Naive thymus-derived CD4-positive, alpha-beta T cell (primary cell): ENCODE measurements at regions of chr11 and their contacts with region 1.

Region 1: DNA sequence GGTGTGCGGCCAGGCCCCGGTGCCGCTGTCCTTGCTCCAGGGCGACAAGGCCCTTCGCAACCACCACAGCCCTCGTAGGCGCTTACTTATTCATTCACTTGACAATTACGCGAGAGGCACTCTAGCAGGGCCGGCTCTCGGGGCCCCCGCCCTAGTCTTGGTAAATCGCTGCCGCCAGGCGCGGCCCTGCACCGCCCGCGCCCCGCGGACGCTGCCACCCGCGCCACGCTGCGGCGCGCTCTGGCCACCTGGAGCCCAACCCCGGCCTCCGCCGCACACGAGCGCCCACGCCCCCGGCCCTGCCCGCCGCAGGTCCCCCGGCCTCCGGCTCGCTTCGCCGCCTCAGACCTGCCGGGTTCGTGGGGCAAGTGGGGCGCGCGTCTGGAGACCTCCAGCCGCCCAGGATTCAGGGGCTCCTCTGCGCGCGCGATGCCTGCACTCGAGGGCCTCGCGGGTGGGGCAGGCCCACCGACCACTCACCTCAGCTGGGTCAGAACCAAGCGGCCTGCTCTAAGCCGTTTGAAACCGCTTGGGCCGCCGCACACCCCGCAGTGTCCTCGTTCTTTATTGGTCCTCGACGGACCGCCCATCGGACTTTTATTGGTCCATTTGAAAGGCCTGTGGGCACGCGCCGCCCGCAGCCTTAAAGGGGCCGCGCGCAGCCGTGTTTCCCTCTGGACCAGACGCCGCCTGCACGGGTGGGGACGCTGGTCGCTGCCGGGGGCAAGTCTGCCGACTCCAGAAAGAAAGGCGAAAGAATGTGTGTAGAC is at the start of gene CKAP5:
- DNase-seq: peak; percentile 63 to 89 (median 80)
- ATAC-seq: peak; percentile 96
- H3K4me3 ChIP-seq: peak within 1 kb of the TSS; percentile 71
- H3K4me3 Mint-ChIP-seq: peak within 1 kb of the TSS; percentile 85 to 99 (median 97)
- H3K27ac ChIP-seq: peak within 1 kb of the TSS; percentile 71
- H3K27ac Mint-ChIP-seq: peak within 1 kb of the TSS; percentile 88 to 97 (median 93)
- H3K4me1 ChIP-seq: peaks cover 0 to 14% of the 10 kb centered on the region in 2 donors
- H3K4me1 Mint-ChIP-seq: peaks cover 33 to 50% (median 43%) of the 10 kb centered on the region in 7 donors
- H3K27me3 ChIP-seq: no peaks in the 10 kb centered on the region
- H3K27me3 Mint-ChIP-seq: no peaks in the 10 kb centered on the region
- total RNA-seq, gene CKAP5: 28.3 to 126 (median 46.0) TPM

Region 2: DNA sequence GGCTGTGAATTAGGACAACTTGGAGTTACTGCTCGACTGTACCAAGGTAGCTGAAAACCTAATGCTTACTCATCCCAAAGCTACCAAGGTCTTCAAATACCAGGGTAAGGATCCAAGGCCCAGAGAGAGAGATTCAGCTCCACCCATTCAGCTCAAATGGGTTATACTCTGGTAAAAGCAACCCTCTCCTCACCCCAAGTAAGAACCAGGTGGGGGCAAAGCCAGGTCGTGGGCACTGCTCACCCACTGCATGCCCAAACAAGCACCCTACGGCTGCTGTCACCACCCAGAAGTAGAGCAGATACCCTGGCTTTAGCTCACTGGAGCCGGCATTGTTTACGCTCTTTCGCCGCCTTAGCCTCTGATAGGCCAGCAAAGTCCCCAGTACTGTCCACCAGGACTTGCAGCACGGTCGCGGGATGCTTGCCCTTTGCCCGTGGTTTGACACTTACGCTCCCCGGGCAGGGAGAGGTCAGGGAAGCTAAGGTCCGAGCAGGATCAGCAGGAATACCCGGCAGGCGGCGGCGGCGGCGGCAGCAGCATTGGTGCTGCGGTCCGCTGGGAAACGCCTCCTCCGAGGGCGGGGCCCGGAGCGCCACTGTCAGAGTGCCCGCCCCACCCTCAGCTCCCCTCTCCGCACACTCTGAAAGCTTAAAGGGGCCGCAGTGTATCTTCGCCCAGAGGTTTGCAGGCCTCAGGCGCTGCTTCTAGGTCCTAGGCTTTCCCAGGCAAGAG is 19.4 kb before region 1 on chr11:
- CTCF ChIA-PET with region 1: no interaction called
- POLR2A ChIA-PET with region 1: no interaction called
- intact Hi-C with region 1: loop called (anchors 1 kb)
- DNase-seq: peak; percentile 48 to 72 (median 67)
- ATAC-seq: peak; percentile 100
- H3K4me3 ChIP-seq: peak overlapping the region; percentile 45
- H3K4me3 Mint-ChIP-seq: peak overlapping the region; percentile 77 to 90 (median 83)
- H3K27ac ChIP-seq: peak overlapping the region; percentile 1
- H3K27ac Mint-ChIP-seq: peak overlapping the region in 5 of 9 donors; percentile 43 to 83 (median 64)
- H3K4me1 ChIP-seq: peaks cover 10 to 11% of the 10 kb centered on the region in 2 donors
- H3K4me1 Mint-ChIP-seq: peaks cover 12 to 49% (median 37%) of the 10 kb centered on the region in 7 donors
- H3K27me3 ChIP-seq: no peaks in the 10 kb centered on the region
- H3K27me3 Mint-ChIP-seq: no peaks in the 10 kb centered on the region

Region 3: GRCh38 chr11:46936138-46937110 is 90.5 kb after region 1 on chr11 and contains the start of gene CSTPP1:
- CTCF ChIA-PET with region 1: no interaction called
- POLR2A ChIA-PET with region 1: no interaction called
- intact Hi-C with region 1: loop called (anchors 1 to 2 kb)
- DNase-seq: peak; percentile 80 to 92 (median 89)
- ATAC-seq: peak; percentile 99
- H3K4me3 ChIP-seq: peak within 1 kb of the TSS; percentile 76
- H3K4me3 Mint-ChIP-seq: peak within 1 kb of the TSS; percentile 86 to 100 (median 92)
- H3K27ac ChIP-seq: peak within 1 kb of the TSS; percentile 72
- H3K27ac Mint-ChIP-seq: peak within 1 kb of the TSS; percentile 89 to 98 (median 92)
- H3K4me1 ChIP-seq: peaks cover 0 to 11% of the 10 kb centered on the region in 2 donors
- H3K4me1 Mint-ChIP-seq: peaks cover 5 to 24% (median 21%) of the 10 kb centered on the region in 7 donors
- H3K27me3 ChIP-seq: no peaks in the 10 kb centered on the region
- H3K27me3 Mint-ChIP-seq: peaks cover 8 to 19% (median 9%) of the 10 kb centered on the region in 5 donors
- total RNA-seq, gene CSTPP1: 9.3 to 18.6 (median 16.1) TPM

Region 4: GRCh38 chr11:47715082-47715669 is 869.3 kb after region 1 on chr11 and contains the start of gene AGBL2:
- CTCF ChIA-PET with region 1: no interaction called
- POLR2A ChIA-PET with region 1: no interaction called
- intact Hi-C with region 1: loop called in 1 of 2 experiments (anchors 1 kb)
- DNase-seq: peak; percentile 61 to 85 (median 82)
- ATAC-seq: peak; percentile 99
- H3K4me3 ChIP-seq: peak within 1 kb of the TSS; percentile 94
- H3K4me3 Mint-ChIP-seq: peak within 1 kb of the TSS; percentile 95 to 99 (median 97)
- H3K27ac ChIP-seq: peak within 1 kb of the TSS; percentile 84
- H3K27ac Mint-ChIP-seq: peak within 1 kb of the TSS; percentile 96 to 99 (median 98)
- H3K4me1 ChIP-seq: peaks cover 7 to 15% of the 10 kb centered on the region in 2 donors
- H3K4me1 Mint-ChIP-seq: peaks cover 0 to 22% (median 15%) of the 10 kb centered on the region in 7 donors
- H3K27me3 ChIP-seq: no peaks in the 10 kb centered on the region
- H3K27me3 Mint-ChIP-seq: no peaks in the 10 kb centered on the region
- total RNA-seq, gene AGBL2: 4.7 to 11.3 (median 8.1) TPM